Dendritic cell treated with granulocyte-macrophage colony-stimulating factor and Interleukin-4, amounts not matched to agents 40 ng/mL and 50 ng/mL, for 4 days (primary cell): ENCODE measurements at regions of chr4 and their contacts with region 1.

Region 1: DNA sequence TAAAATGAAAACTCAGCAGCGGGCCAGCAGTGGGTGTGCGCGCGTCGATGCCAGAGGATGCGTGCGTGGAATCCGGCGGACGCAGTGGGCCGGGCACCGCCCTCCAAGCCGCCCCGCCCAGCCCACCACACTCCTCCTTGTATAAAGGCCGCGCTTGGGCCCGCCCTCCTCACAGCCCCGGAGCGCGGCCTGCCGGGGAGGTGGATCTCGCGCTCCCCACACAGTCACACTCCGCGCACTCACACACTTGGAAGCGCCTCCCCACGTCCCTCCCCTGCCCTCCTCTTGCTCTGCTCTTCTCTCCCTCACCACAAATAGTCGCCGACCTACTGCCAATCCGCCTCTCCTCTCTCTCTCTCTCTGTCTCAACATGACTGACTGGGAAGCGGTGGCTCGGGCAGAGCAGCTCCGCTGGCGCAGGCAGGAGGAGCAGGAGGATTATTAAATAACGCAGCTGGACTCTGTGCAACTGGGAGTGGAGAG is at the start of gene CCSER1:
- H3K4me3 Mint-ChIP-seq: peak within 1 kb of the TSS; percentile 87
- H3K27ac Mint-ChIP-seq: peak within 1 kb of the TSS; percentile 92
- H3K4me1 Mint-ChIP-seq: peaks cover 33% of the 10 kb centered on the region
- H3K27me3 Mint-ChIP-seq: peaks cover 10% of the 10 kb centered on the region

Region 2: GRCh38 chr4:89661490-89661889 is 465.8 kb before region 1 on chr4:
- intact Hi-C with region 1: no loop called
- H3K4me3 Mint-ChIP-seq: no peak overlapping the region
- H3K27ac Mint-ChIP-seq: no peak overlapping the region
- H3K4me1 Mint-ChIP-seq: peaks cover 4% of the 10 kb centered on the region
- H3K27me3 Mint-ChIP-seq: no peaks in the 10 kb centered on the region

Region 3: GRCh38 chr4:89724716-89725115 is 402.5 kb before region 1 on chr4:
- intact Hi-C with region 1: no loop called
- H3K4me3 Mint-ChIP-seq: no peak overlapping the region
- H3K27ac Mint-ChIP-seq: no peak overlapping the region
- H3K4me1 Mint-ChIP-seq: no peaks in the 10 kb centered on the region
- H3K27me3 Mint-ChIP-seq: no peaks in the 10 kb centered on the region

Region 4: DNA sequence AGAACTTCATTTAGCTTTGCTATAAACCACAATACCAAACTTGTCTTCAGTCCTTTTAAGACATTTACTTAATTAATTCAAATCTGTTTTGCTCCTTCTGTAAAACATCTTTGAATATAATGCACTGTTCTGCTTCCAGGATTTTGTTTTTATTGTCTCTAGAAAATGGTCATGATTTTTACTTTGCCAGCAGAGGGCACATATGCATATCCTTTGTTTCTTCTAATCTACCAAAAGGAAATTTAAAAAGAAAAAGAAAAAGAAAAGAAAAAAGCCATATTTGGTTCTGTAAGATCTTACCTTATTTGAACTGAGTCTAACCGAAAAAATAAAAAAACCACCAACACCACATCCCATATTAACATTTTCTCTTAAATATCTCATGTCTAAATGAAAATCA is 102.0 kb before region 1 on chr4:
- intact Hi-C with region 1: loop called (anchors 2 kb)
- H3K4me3 Mint-ChIP-seq: no peak overlapping the region
- H3K27ac Mint-ChIP-seq: no peak overlapping the region
- H3K4me1 Mint-ChIP-seq: peaks cover 35% of the 10 kb centered on the region
- H3K27me3 Mint-ChIP-seq: no peaks in the 10 kb centered on the region

Region 5: GRCh38 chr4:90071289-90072235 is 55.7 kb before region 1 on chr4:
- intact Hi-C with region 1: loop called (anchors 5 kb)
- H3K4me3 Mint-ChIP-seq: peak overlapping the region; percentile 27
- H3K27ac Mint-ChIP-seq: peak overlapping the region; percentile 91
- H3K4me1 Mint-ChIP-seq: peaks cover 28% of the 10 kb centered on the region
- H3K27me3 Mint-ChIP-seq: no peaks in the 10 kb centered on the region

Region 6: GRCh38 chr4:90084967-90085295 is 42.3 kb before region 1 on chr4:
- intact Hi-C with region 1: loop called (anchors 5 kb)
- H3K4me3 Mint-ChIP-seq: peak overlapping the region; percentile 76
- H3K27ac Mint-ChIP-seq: peak overlapping the region; percentile 85
- H3K4me1 Mint-ChIP-seq: peaks cover 25% of the 10 kb centered on the region
- H3K27me3 Mint-ChIP-seq: no peaks in the 10 kb centered on the region

Region 7: GRCh38 chr4:90099812-90100211 is 27.5 kb before region 1 on chr4:
- intact Hi-C with region 1: loop called (anchors 2 kb)
- H3K4me3 Mint-ChIP-seq: no peak overlapping the region
- H3K27ac Mint-ChIP-seq: peak overlapping the region; percentile 60
- H3K4me1 Mint-ChIP-seq: peaks cover 14% of the 10 kb centered on the region
- H3K27me3 Mint-ChIP-seq: no peaks in the 10 kb centered on the region

Region 8: GRCh38 chr4:90293320-90293719 is 166.1 kb after region 1 on chr4:
- intact Hi-C with region 1: loop called (anchors 10 kb)
- H3K4me3 Mint-ChIP-seq: no peak overlapping the region
- H3K27ac Mint-ChIP-seq: no peak overlapping the region
- H3K4me1 Mint-ChIP-seq: no peaks in the 10 kb centered on the region
- H3K27me3 Mint-ChIP-seq: no peaks in the 10 kb centered on the region